MCF 10A (cell line): ENCODE measurements at regions of chr17 and their contacts with region 1.

Region 1: DNA sequence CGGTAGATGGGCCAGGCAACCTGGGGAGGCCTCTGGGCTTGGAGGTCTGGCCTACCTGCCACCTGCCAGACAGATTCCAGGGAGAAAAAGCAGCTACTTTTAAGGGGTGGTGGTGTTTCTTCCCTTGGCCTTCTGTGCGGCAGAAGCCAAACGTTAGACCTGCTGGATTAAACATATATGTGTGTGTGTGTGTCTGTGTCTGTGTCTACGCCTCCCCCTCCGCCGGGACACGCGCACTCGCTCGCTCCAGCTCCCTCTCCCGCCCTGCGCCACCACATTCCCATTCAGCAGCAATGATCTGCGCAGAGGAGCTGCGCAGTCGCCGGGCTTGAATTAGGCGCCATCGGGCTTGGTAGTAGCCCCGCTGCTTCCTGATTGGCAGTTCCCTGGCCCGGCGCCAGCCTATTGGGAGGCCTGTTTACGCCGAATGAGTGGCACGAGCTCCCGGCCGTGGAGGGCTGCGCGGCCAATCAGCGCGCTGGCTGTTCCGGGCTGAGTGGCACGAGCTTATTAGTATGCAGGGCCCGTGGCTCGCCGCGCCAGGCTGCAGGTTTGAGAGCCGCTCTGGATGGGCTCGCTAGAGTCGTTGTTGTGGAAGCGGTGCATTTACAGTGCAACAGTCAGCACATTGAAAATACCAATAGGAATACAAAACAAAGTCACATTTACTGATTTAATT is at the start of gene BAHCC1:
- DNase-seq: peak; percentile 100
- H3K4me3 Mint-ChIP-seq: peak within 1 kb of the TSS; percentile 89
- H3K27ac Mint-ChIP-seq: peak within 1 kb of the TSS; percentile 99
- H3K4me1 Mint-ChIP-seq: peaks cover 16% of the 10 kb centered on the region
- H3K27me3 Mint-ChIP-seq: no peaks in the 10 kb centered on the region
- CTCF ChIP-seq: no peak
- total RNA-seq, gene BAHCC1: 7.4 and 9.2 TPM in 2 replicates

Region 2: DNA sequence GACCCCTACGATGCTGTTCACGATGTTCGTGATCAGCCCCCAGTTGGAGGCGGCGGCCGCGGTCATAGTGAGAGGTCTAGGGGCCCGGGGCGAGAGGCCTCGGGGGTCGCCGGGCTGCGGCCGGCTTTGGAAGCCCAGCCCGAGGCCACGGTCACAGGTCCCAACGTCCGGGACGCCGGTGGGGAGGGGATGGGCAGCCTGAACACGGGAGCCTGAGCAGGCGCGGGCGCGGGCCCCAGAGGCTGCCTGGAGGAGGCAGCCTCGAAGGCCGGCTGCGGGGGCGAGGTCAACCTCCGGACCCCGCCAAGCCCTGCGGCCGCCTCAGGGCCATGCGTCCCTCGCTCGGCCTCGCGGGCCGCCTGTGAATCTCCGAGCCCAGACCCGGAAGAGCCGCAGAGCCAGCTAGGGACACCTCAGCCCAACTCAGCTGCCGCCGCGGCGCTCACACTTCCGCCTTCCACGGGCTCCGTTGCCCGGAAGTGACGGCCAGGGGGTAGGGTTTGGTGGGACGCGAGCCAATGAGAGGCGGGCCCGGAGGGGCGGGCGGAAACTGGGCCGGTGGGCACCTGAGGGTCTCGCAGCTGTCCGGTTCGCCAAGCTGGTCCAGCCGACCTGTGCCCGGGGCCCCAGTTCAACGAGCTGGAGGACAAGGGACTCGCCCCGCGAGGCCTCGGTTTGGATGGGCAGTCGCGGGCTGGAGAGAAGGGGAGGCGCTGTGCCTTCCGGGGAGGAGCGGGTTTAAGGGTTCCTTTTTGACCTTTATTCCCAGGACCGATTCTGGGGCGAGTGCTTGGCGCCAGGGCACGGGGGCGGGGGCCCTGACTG is 100.0 kb before region 1 on chr17 and contains the start of gene SLC38A10:
- CTCF ChIA-PET with region 1: interaction called, 4 read pairs
- POLR2A ChIA-PET with region 1: interaction called, 30 read pairs
- intact Hi-C with region 1: no loop called
- DNase-seq: peak; percentile 88
- H3K4me3 Mint-ChIP-seq: peak within 1 kb of the TSS; percentile 84
- H3K27ac Mint-ChIP-seq: peak within 1 kb of the TSS; percentile 93
- H3K4me1 Mint-ChIP-seq: peaks cover 13% of the 10 kb centered on the region
- H3K27me3 Mint-ChIP-seq: peaks cover under 1% of the 10 kb centered on the region
- CTCF ChIP-seq: no peak
- total RNA-seq, gene SLC38A10: 98.2 and 108 TPM in 2 replicates

Region 3: GRCh38 chr17:81328978-81329919 is 65.8 kb before region 1 on chr17:
- CTCF ChIA-PET with region 1: interaction called, 4 read pairs
- POLR2A ChIA-PET with region 1: interaction called, 82 read pairs
- intact Hi-C with region 1: loop called (anchors 5 kb)
- DNase-seq: peak; percentile 99
- H3K4me3 Mint-ChIP-seq: peak overlapping the region; percentile 64
- H3K27ac Mint-ChIP-seq: peak overlapping the region; percentile 80
- H3K4me1 Mint-ChIP-seq: peaks cover 28% of the 10 kb centered on the region
- H3K27me3 Mint-ChIP-seq: no peaks in the 10 kb centered on the region
- CTCF ChIP-seq: no peak

Region 4: GRCh38 chr17:81405411-81405872 is 10.4 kb after region 1 on chr17:
- CTCF ChIA-PET with region 1: no interaction called
- POLR2A ChIA-PET with region 1: interaction called, 10 read pairs
- intact Hi-C with region 1: no loop called
- DNase-seq: peak; percentile 34
- H3K4me3 Mint-ChIP-seq: no peak overlapping the region
- H3K27ac Mint-ChIP-seq: no peak overlapping the region
- H3K4me1 Mint-ChIP-seq: peaks cover 5% of the 10 kb centered on the region
- H3K27me3 Mint-ChIP-seq: no peaks in the 10 kb centered on the region
- CTCF ChIP-seq: no peak

Region 5: GRCh38 chr17:81453712-81454111 is 58.7 kb after region 1 on chr17:
- CTCF ChIA-PET with region 1: no interaction called
- POLR2A ChIA-PET with region 1: no interaction called
- intact Hi-C with region 1: no loop called
- DNase-seq: no peak
- H3K4me3 Mint-ChIP-seq: no peak overlapping the region
- H3K27ac Mint-ChIP-seq: no peak overlapping the region
- H3K4me1 Mint-ChIP-seq: no peaks in the 10 kb centered on the region
- H3K27me3 Mint-ChIP-seq: no peaks in the 10 kb centered on the region
- CTCF ChIP-seq: no peak

Region 6: GRCh38 chr17:81471804-81472456 is 76.9 kb after region 1 on chr17:
- CTCF ChIA-PET with region 1: no interaction called
- POLR2A ChIA-PET with region 1: no interaction called
- intact Hi-C with region 1: no loop called
- DNase-seq: no peak
- H3K4me3 Mint-ChIP-seq: no peak overlapping the region
- H3K27ac Mint-ChIP-seq: no peak overlapping the region
- H3K4me1 Mint-ChIP-seq: peaks cover 4% of the 10 kb centered on the region
- H3K27me3 Mint-ChIP-seq: no peaks in the 10 kb centered on the region
- CTCF ChIP-seq: no peak

Region 7: DNA sequence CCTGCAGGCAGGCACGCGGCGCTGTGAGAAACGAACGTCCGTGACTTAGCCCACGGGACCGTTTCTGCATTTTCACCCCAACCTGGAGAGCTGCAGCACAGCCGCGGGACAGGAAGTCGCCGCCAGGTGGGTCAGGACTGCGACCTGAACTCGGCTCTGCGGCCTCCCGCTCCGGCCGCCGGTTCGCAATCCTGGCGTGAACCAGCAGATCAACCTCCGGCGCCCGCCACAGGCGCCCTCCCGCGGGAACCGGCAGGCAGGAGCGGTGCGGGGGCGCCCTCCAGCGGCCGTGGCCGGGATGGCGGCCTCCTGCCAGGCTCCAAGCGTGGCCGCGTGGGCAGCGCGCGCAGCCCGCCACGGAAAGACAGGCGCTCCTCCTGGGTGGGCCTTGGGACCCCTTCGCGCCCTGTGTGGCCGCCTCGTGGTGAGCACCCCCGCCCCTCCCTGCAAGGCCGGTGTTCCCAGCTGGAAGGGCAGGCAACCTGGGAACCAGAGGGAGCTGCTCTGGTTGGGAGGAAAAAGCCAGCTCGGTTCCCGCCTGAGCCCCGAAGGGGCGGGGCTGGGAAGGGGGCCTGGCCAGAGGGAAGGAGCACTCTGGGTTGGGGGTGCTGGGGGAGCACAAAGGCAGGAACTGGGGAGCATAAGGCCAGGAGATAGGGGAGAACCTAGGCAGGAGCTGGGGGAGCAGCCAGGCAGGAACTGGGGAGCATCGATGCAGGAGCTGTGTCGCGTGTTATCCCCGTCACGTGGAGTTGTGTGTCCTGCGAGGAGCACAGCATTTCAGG is 89.3 kb after region 1 on chr17:
- CTCF ChIA-PET with region 1: interaction called, 7 read pairs
- POLR2A ChIA-PET with region 1: interaction called, 8 read pairs
- intact Hi-C with region 1: loop called (anchors 2 kb)
- DNase-seq: peak; percentile 70
- H3K4me3 Mint-ChIP-seq: no peak overlapping the region
- H3K27ac Mint-ChIP-seq: no peak overlapping the region
- H3K4me1 Mint-ChIP-seq: no peaks in the 10 kb centered on the region
- H3K27me3 Mint-ChIP-seq: no peaks in the 10 kb centered on the region
- CTCF ChIP-seq: peak; percentile 98

Region 8: DNA sequence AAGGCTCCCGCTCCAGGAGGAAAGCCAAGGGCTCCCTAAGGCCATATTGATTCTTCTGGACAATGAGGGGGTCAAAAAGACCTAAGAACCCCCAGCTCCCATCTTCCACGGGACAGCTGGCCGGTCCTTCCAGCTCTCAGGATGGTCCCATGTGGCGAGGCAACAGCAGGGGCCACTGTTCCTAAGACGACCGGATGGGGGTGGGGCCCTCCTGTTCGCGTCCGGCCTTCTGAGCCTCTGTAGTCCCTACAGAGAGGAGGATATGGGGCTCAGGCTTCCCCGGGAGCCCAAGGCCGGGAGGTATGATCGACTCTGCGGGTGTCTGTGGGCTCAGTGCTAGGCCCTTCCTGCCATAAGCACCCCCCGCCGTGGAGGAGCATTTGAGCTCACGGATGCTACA is 648.4 kb after region 1 on chr17:
- CTCF ChIA-PET with region 1: no interaction called
- POLR2A ChIA-PET with region 1: no interaction called
- intact Hi-C with region 1: no loop called
- DNase-seq: no peak
- H3K4me3 Mint-ChIP-seq: no peak overlapping the region
- H3K27ac Mint-ChIP-seq: no peak overlapping the region
- H3K4me1 Mint-ChIP-seq: peaks cover 8% of the 10 kb centered on the region
- H3K27me3 Mint-ChIP-seq: no peaks in the 10 kb centered on the region
- CTCF ChIP-seq: no peak